ENCODE measurements at regions of chr6 and their contacts with region 1.

Region 1: DNA sequence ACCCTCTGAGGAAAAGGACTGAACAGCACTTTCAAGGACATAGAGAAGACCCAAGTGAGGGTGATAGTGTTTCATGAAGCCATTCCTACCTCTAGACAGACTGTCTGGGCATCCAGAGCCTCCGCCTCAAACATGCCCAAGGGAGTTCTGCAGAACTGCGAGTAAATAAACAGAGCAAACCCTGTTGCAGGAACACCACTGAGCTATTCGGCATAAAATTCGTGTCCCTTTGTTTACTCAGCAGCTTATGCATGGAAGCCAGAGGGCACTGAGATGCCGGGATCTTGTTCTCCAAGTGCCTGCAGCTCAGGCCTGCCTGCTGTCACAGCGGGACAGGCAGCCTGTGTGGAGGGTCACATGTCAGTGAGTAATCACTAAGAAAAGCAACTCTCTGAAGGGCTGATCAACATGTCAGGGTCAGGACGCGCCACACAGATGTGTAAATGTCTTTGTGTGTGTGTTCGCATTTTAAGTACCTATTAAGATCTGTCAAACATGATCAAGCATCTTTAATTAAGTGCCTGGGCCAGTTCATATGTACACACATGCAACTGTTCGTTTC is 164.9 kb upstream of the HEY2 start:
- DNase-seq: peak in 1 of 2 experiments; percentile 41
- H3K4me3 ChIP-seq: no peak overlapping the region
- H3K27ac ChIP-seq: no peak overlapping the region
- H3K4me1 ChIP-seq: peaks cover 24% of the 10 kb centered on the region
- H3K27me3 ChIP-seq: no peaks in the 10 kb centered on the region
- CTCF ChIP-seq: no peak

Region 2: DNA sequence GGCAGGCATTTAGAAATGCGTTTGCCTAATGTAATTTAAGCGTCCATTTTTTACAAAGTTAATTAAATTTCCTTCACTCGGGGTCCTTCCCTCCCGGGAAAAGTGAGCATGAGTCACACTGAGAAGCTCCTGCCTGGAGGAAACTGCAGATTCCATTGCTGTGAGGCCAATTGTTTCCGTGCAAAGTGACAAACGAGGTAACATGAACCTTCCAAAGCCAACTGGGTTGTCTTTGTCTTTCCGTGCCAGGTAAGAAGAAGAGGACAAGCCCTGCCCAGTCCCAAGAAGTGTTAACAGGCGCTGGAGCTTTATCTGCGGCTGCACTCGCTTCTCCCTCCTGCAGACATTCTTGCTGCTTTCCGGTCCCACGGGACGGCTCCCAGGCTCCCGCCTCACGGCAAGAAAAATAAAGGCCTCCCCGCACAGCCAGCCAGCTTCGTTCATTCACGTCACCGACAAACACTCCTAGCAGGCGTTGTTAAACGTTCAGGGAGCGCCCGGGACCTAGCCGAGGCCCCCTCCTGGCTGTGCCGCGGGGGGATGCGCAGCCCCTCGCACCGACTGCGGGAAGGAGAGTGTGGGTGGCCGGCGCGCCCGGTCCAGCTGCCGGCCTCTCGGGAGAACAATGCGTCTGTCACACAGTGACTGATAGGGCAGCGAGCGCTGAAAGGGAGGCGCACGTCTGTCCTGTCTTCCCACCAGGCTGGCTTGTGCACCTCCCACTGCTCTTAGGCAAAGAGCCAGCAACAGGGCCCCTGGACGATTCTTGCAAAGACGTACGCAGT is 221.3 kb before region 1 on chr6:
- CTCF ChIA-PET with region 1: no interaction called
- POLR2A ChIA-PET with region 1: no interaction called
- intact Hi-C with region 1: loop called (anchors 10 kb)
- DNase-seq: peak; percentile 64 to 86
- H3K4me3 ChIP-seq: peak overlapping the region; percentile 59
- H3K27ac ChIP-seq: peak overlapping the region; percentile 10
- H3K4me1 ChIP-seq: peaks cover 16% of the 10 kb centered on the region
- H3K27me3 ChIP-seq: no peaks in the 10 kb centered on the region
- CTCF ChIP-seq: no peak

Region 3: GRCh38 chr6:125623085-125623484 is 38.5 kb after region 1 on chr6:
- CTCF ChIA-PET with region 1: no interaction called
- POLR2A ChIA-PET with region 1: no interaction called
- intact Hi-C with region 1: no loop called
- DNase-seq: no peak
- H3K4me3 ChIP-seq: no peak overlapping the region
- H3K27ac ChIP-seq: no peak overlapping the region
- H3K4me1 ChIP-seq: 0 out of 2 replicates have a peak, but pooled peaks cover 6% of the 10 kb centered on the region
- H3K27me3 ChIP-seq: peaks cover under 1% of the 10 kb centered on the region; the same call in 1 of the 2 replicates
- CTCF ChIP-seq: no peak